Endothelial cell of umbilical vein (primary cell): ENCODE measurements at regions of chr14 and their contacts with region 1.

Region 1: GRCh38 chr14:92793709-92794546 is at the start of gene GOLGA5:
- DNase-seq: peak; percentile 99
- H3K4me3 ChIP-seq: peak within 1 kb of the TSS; percentile 52 to 75 (median 75)
- H3K27ac ChIP-seq: peak within 1 kb of the TSS; percentile 54
- H3K4me1 ChIP-seq: peaks cover 9% of the 10 kb centered on the region
- H3K27me3 ChIP-seq: no peaks in the 10 kb centered on the region
- CTCF ChIP-seq: no peak
- POLR2A ChIP-seq: peak; percentile 85
- total RNA-seq, gene GOLGA5: 28.9 and 29.3 TPM in 2 replicates

Region 2: GRCh38 chr14:92121670-92122350 is 672.1 kb before region 1 on chr14 and contains the starts of genes CPSF2 and NDUFB1:
- CTCF ChIA-PET with region 1: no interaction called
- POLR2A ChIA-PET with region 1: interaction called, 3 read pairs
- dilution Hi-C with region 1: no loop called
- intact Hi-C with region 1: loop called (anchors 5 kb)
- DNase-seq: peak; percentile 84
- H3K4me3 ChIP-seq: peak within 1 kb of the TSS; percentile 40 to 89 (median 79)
- H3K27ac ChIP-seq: peak within 1 kb of the TSS; percentile 75
- H3K4me1 ChIP-seq: peaks cover 7% of the 10 kb centered on the region
- H3K27me3 ChIP-seq: no peaks in the 10 kb centered on the region
- CTCF ChIP-seq: no peak
- POLR2A ChIP-seq: peak; percentile 95
- total RNA-seq, gene CPSF2: 76.9 and 81.7 TPM in 2 replicates
- total RNA-seq, gene NDUFB1: 95.2 and 114 TPM in 2 replicates

Region 3: GRCh38 chr14:92540472-92541053 is 253.4 kb before region 1 on chr14:
- CTCF ChIA-PET with region 1: no interaction called
- POLR2A ChIA-PET with region 1: no interaction called
- dilution Hi-C with region 1: no loop called
- intact Hi-C with region 1: loop called (anchors 1 kb)
- DNase-seq: peak; percentile 99
- H3K4me3 ChIP-seq: no peak overlapping the region
- H3K27ac ChIP-seq: peak overlapping the region; percentile 98
- H3K4me1 ChIP-seq: peaks cover 24% of the 10 kb centered on the region
- H3K27me3 ChIP-seq: no peaks in the 10 kb centered on the region
- CTCF ChIP-seq: no peak
- POLR2A ChIP-seq: peak; percentile 72

Region 4: DNA sequence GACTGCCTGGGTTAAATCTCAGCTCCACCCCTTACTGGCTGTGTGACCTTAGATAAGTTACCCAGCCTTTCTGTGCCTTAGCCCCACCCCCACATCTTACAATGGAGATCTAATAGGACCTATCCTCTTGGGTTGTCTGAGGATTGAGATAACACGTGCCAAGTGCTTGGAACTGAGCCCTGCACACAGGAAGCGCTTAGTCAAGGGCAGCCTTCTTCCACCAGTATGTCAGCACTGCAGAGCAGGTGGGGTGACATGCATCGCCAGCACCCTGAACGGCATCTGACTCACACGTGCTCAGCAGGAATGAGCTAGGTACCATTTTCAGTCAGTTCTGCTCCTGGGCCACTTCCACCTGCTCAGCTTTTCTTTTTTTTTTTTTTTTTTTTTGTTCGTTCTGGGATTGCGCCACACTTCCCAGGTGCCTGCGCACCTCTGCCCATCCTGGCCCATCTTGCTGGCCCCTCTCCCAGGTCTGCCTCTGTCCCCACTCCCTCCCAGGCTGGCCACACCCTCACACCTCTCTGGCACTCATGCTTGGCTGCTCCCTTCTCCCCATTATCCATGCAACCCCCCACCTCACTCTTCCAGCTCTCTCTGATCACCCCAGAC is 65.1 kb before region 1 on chr14:
- CTCF ChIA-PET with region 1: interaction called, 3 read pairs
- POLR2A ChIA-PET with region 1: no interaction called
- dilution Hi-C with region 1: no loop called
- intact Hi-C with region 1: loop called (anchors 1 kb)
- DNase-seq: peak; percentile 20
- H3K4me3 ChIP-seq: no peak overlapping the region
- H3K27ac ChIP-seq: no peak overlapping the region
- H3K4me1 ChIP-seq: peaks cover 10% of the 10 kb centered on the region
- H3K27me3 ChIP-seq: no peaks in the 10 kb centered on the region
- CTCF ChIP-seq: no peak
- POLR2A ChIP-seq: no peak

Region 5: DNA sequence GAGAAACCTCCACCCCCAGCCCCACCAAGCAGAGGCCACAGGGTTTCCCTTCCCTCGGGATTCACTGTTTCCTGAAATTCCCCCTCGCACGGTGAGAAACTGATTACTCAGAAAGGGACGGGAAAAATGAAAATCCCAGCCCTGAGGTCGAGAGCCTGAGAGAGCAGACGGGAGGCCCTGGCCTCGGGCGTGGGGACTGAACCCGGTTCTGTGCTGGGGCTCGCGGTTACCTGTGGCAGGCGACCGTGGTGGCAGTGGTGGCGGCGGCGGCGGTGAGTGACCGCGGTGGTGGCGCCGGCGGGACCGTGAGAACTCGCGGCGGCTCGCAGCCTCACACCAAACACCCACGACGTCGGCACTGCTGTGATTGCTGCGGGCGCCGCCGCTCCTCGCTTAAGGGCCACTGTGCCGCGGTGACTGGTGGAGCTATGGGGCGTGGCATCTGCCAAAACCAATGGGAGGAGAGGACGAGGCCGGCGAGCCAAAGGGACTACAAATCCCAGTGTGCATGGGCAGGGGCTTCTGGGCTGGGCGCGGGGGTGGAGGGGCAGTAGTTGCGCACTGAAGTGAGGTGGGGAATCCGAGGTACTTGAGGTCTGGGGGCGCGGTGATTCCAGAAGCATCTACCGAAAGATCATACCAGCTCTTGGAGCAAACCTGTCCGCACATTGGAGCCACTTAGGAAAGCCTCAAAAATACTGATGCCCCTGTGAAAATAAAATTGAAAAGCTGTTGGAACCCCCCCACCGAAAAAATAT is 45.5 kb before region 1 on chr14 and contains the start of gene LGMN:
- CTCF ChIA-PET with region 1: interaction called, 3 read pairs
- POLR2A ChIA-PET with region 1: no interaction called
- dilution Hi-C with region 1: no loop called
- intact Hi-C with region 1: loop called (anchors 1 kb)
- DNase-seq: peak; percentile 97
- H3K4me3 ChIP-seq: peak within 1 kb of the TSS; percentile 37 to 79 (median 66)
- H3K27ac ChIP-seq: peak within 1 kb of the TSS; percentile 59
- H3K4me1 ChIP-seq: peaks cover 7% of the 10 kb centered on the region
- H3K27me3 ChIP-seq: peaks cover 0 to 2% of the 10 kb centered on the region in 2 experiments
- CTCF ChIP-seq: no peak
- POLR2A ChIP-seq: peak; percentile 94
- total RNA-seq, gene LGMN: 56.7 and 62.6 TPM in 2 replicates